ENCODE measurements at regions of chr18 and their contacts with region 1.

Region 1: DNA sequence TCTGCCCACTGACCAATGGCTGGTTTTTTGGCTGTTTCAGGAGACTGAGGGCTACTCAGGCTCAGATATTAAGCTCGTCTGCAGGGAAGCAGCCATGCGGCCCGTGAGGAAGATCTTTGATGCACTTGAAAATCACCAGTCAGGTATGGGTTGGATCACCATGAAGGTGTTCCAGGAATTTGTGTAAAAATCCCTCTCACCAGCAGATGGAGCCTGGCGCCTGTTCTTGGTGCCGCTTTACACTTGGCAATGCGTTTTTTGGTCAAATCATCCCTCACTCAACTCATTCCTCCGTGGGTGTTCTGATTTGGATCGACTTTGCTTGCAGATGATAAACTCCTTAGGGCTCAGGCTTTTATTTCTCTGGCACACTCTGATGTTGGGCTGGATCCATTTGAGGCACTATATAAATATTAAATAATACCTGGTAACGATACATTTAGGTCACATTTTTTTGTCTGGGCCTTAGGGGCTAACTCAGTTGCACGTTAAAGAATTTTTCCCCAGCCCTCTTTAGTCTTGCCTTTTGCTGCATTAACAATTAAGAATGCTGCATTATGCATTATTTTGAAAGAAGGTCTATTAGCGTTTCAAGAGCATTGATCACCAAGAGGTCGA is 50.0 kb downstream of the HDHD2 start:
- DNase-seq: peak; percentile 67
- H3K4me3 Mint-ChIP-seq: no peak overlapping the region
- H3K27ac Mint-ChIP-seq: no peak overlapping the region
- H3K4me1 Mint-ChIP-seq: no peaks in the 10 kb centered on the region
- H3K27me3 Mint-ChIP-seq: no peaks in the 10 kb centered on the region
- CTCF ChIP-seq: peak; percentile 72

Region 2: GRCh38 chr18:47204908-47205522 is 104.7 kb after region 1 on chr18:
- CTCF ChIA-PET with region 1: interaction called, 5 read pairs
- intact Hi-C with region 1: loop called (anchors 1 kb)
- DNase-seq: peak; percentile 54
- H3K4me3 Mint-ChIP-seq: no peak overlapping the region
- H3K27ac Mint-ChIP-seq: no peak overlapping the region
- H3K4me1 Mint-ChIP-seq: no peaks in the 10 kb centered on the region
- H3K27me3 Mint-ChIP-seq: peaks cover 91% of the 10 kb centered on the region
- CTCF ChIP-seq: peak; percentile 66

Measured in Calu3 (cell line).